B cell (primary cell): ENCODE measurements at regions of chr12 and their contacts with region 1.

Region 1: DNA sequence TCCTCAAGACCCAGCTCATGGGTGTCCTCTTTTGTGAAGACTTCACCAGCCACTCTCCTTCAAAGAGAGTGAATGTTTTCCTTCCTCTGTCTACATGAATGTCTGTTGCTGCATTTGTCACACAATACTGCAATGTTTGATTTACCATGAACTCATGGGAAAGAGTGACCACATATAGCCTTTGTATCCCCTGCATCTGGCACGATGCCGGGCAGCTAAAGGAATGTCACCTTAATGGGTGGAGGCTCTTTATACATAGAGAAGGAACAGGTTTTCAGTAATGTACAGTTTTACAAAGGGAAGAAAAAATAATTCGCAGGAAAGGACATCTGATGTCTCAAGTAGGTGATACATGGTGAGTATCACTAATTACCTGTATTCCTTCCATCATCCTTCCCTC is 12.1 kb upstream of the BCDIN3D start:
- DNase-seq: no peak
- ATAC-seq: no peak
- H3K4me3 ChIP-seq: no peak overlapping the region
- H3K4me3 Mint-ChIP-seq: no peak overlapping the region
- H3K27ac ChIP-seq: no peak overlapping the region
- H3K27ac Mint-ChIP-seq: no peak overlapping the region
- H3K4me1 ChIP-seq: no peaks in the 10 kb centered on the region
- H3K4me1 Mint-ChIP-seq: no peaks in the 10 kb centered on the region
- H3K27me3 ChIP-seq: peaks cover 0 to 2% (median 0%) of the 10 kb centered on the region in 4 experiments
- H3K27me3 Mint-ChIP-seq: peaks cover 42% of the 10 kb centered on the region
- CTCF ChIP-seq: no peak

Region 2: DNA sequence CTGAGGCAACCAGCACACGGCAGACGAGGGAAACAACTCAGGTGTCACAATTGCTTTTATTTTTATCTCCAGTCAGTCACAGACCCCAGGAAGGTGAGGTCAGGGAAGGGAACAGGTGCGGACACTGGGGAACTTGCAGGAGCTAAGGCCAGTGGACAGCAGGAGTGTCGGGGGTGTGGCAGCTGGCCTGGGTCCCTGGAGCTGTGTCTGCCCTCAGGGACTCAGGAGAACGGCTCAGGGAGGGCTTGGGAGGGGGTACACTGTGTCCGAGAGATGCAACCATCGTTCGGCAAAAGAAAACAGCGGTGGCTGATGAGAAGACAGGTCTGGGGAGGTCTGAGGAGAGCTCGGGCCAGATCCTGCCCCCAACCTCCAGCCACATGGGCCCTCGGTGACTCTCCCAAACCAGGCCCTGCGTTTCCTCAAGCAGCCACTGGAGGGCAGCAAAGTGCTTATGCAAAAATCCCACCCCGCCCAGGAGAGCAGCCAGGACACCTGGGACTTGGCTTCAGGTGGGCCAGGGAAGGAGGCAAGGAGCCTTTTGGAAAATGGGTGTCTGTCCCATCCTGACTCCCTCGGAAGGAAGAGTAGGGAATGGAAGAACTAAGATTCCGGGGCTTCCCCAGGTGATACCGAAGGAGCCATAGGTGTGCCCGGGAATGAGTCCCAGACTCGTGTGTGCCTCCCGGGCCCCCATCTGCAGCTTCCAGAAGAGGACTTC is 12.0 kb after region 1 on chr12:
- CTCF ChIA-PET with region 1: interaction called, 14 read pairs
- POLR2A ChIA-PET with region 1: interaction called, 3 read pairs
- intact Hi-C with region 1: no loop called
- DNase-seq: peak; percentile 79
- ATAC-seq: peak; percentile 96
- H3K4me3 ChIP-seq: no peak overlapping the region
- H3K4me3 Mint-ChIP-seq: no peak overlapping the region
- H3K27ac ChIP-seq: no peak overlapping the region
- H3K27ac Mint-ChIP-seq: no peak overlapping the region
- H3K4me1 ChIP-seq: no peaks in the 10 kb centered on the region
- H3K4me1 Mint-ChIP-seq: no peaks in the 10 kb centered on the region
- H3K27me3 ChIP-seq: no peaks in the 10 kb centered on the region
- H3K27me3 Mint-ChIP-seq: peaks cover 14% of the 10 kb centered on the region
- CTCF ChIP-seq: peak; percentile 95

Region 3: DNA sequence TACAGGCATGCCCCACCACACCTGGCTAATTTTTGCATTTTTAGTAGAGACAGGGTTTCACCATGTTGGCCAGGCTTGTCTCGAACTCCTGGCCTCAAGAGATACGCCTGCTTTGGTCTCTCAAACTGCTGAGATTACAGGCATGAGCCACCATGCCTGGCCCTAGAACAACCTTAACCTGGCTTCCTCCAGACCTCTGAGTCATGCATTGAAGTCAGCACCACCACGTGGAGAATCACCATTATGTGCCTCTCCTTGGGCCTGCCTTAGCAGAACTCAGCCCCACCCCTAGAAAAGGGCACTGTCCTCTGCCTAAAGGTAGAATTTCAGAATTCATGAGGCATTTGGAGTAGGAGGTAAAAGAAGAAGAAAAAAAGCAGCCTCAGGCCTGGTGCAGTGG is 379.3 kb after region 1 on chr12:
- CTCF ChIA-PET with region 1: no interaction called
- POLR2A ChIA-PET with region 1: no interaction called
- intact Hi-C with region 1: no loop called
- DNase-seq: no peak
- ATAC-seq: no peak
- H3K4me3 ChIP-seq: no peak overlapping the region
- H3K4me3 Mint-ChIP-seq: no peak overlapping the region
- H3K27ac ChIP-seq: no peak overlapping the region
- H3K27ac Mint-ChIP-seq: no peak overlapping the region
- H3K4me1 ChIP-seq: no peaks in the 10 kb centered on the region
- H3K4me1 Mint-ChIP-seq: no peaks in the 10 kb centered on the region
- H3K27me3 ChIP-seq: peaks cover 0 to 4% (median 0%) of the 10 kb centered on the region in 4 experiments
- H3K27me3 Mint-ChIP-seq: no peaks in the 10 kb centered on the region
- CTCF ChIP-seq: no peak